Activated T-helper 1 cell treated with anti-CD3 and anti-CD28 coated beads, Interleukin-12 subunit alpha, Interleukin-12 subunit beta, Interleukin-2, Interleukin-4 antibody, amounts not matched to agents 30 ng/mL and 10 ng/mL and 1 ng/mL, durations not matched to agents 14 hours and 24 hours and 36 hours (primary cell): ENCODE measurements at regions of chr5 and their contacts with region 1.

Region 1: DNA sequence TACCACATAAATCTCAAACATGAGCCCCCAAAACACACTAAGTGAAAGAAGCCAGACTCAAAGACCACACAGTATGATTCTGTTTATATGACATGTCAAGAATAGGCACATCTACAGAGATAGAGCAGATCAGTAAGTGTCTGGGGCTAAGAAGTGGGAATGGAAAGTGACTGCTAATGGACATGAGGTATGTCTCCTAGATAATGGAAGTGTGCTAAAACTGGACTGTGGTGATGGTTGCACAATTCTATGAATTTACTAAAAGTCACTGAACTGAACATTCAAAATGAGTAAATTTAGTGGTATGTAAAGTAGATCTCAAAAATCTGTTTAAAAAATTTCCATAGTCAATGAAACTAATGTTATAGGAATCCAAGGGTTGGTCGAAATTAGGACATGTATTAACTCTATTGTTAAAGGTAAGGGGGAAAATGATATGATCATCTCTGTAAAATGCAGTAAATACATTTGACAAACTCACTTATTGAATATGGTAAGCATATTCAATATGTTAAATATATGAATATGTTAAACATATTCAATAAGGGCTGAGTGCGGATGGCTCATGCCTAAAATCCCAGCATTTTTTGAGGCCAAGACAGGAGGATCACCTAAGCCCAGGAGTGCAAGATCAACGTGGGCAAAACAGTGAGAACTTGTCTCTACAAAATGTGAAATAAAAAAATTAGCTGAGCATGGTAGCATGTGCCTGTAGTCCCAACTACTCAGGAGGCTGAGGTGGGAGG is 51.7 kb downstream of the NUP155 start:
- DNase-seq: no peak
- H3K4me3 Mint-ChIP-seq: no peak overlapping the region
- H3K27ac Mint-ChIP-seq: no peak overlapping the region
- H3K4me1 Mint-ChIP-seq: peaks cover 15% of the 10 kb centered on the region
- H3K27me3 Mint-ChIP-seq: no peaks in the 10 kb centered on the region

Region 2: GRCh38 chr5:37355166-37355565 is 36.0 kb after region 1 on chr5:
- intact Hi-C with region 1: loop called (anchors 5 kb)
- DNase-seq: no peak
- H3K4me3 Mint-ChIP-seq: no peak overlapping the region
- H3K27ac Mint-ChIP-seq: no peak overlapping the region
- H3K4me1 Mint-ChIP-seq: no peaks in the 10 kb centered on the region
- H3K27me3 Mint-ChIP-seq: no peaks in the 10 kb centered on the region